Astrocyte of the cerebellum (primary cell): ENCODE measurements at regions of chr12 and their contacts with region 1.

Region 1: GRCh38 chr12:129788506-129789084 is 115.2 kb downstream of the TMEM132D start:
- DNase-seq: peak; percentile 23
- H3K4me3 ChIP-seq: no peak overlapping the region
- CTCF ChIP-seq: no peak

Region 2: GRCh38 chr12:129696926-129697325 is 91.7 kb before region 1 on chr12:
- in situ Hi-C with region 1: no loop called
- DNase-seq: peak; percentile 71
- H3K4me3 ChIP-seq: no peak overlapping the region
- CTCF ChIP-seq: no peak

Region 3: DNA sequence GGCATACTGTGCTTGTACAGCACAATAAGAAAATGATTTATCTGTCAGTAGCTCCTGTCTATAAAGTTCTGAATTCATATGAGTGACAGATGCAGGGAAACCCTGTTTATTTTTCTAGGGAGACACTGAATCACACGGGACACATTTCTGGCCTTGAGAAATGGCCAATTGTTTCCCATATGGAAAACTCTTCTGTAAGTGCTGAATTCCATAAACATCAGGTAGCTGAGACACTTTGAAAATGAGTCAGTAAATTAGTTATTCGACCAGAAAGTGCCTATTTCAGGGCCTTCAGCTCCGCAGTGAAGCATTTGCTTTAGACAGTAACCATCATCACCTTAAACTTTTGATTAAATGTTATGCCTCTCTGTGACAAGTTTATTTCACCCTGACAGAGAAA is 69.2 kb before region 1 on chr12:
- in situ Hi-C with region 1: no loop called
- DNase-seq: no peak
- H3K4me3 ChIP-seq: no peak overlapping the region
- CTCF ChIP-seq: no peak

Region 4: GRCh38 chr12:129844662-129845220 is 56.1 kb after region 1 on chr12:
- in situ Hi-C with region 1: no loop called
- DNase-seq: peak; percentile 78
- H3K4me3 ChIP-seq: no peak overlapping the region
- CTCF ChIP-seq: no peak

Region 5: DNA sequence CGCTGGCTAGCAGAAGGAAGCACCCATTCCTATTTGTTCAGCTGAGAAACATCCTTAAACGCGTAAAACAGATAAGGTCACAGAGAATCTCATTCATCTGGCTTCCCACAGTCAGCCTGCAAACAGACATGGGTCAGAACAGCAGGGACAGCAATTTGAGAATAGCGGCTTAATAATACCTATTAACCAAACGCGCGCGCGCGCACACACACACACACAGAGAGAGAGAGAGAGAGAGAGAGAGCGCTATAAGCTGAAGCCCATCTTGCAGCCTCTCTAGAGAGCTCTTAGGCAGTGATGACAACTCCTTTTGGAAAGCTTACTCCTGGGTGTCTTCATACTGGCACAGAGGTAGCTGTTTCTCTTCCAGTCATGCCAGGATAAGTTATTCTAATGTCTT is 88.8 kb after region 1 on chr12:
- in situ Hi-C with region 1: loop called (anchors 5 kb)
- DNase-seq: no peak
- H3K4me3 ChIP-seq: no peak overlapping the region
- CTCF ChIP-seq: no peak